K562 (cell line): ENCODE measurements at regions of chr2 and their contacts with region 1.

Region 1: DNA sequence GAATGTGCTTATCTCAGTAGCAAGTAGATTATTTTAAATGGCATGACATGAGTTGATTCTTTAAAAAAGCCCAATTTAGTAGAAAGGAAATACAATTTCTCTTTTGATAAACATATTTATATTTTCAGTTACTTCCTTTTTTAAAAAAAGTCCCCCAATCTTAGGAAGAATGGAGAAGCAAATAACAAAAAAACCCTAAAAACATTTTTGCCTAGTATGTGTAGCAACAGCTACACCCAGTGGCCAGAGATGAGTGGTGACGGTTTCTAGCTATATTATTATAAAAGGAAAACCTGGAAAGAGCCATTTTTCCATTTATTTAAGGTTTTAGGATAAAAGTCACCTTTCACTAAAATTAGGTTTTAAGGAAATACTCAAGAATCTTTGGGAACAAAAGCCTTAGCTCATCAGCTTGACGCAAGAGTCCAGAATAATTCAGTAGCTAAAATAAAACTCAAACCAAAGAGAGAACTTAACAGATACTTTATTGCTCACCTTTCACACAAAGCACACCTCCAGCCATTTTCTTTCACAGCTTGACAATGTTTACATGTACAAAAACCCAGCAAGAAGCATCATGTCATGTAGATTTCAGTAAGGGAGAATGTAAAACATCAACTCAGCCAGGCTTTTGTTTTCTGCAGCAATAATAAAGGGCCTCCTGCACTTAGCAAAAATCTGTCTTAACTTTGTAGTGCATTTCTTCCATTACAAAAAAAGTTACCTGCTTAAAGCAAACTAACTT is 15.7 kb downstream of the FAM98A start:
- DNase-seq: peak; percentile 23 to 50 (median 34)
- ATAC-seq: peak; percentile 75
- H3K4me3 ChIP-seq: no peak overlapping the region
- H3K27ac ChIP-seq: no peak overlapping the region
- H3K4me1 ChIP-seq: no peaks in the 10 kb centered on the region
- H3K27me3 ChIP-seq: no peaks in the 10 kb centered on the region
- CTCF ChIP-seq: peak; percentile 59 to 83 (median 64); a peak in 5 of 6 replicates
- EP300 ChIP-seq: no peak
- POLR2A ChIP-seq: no peak
- RAD21 ChIP-seq: peak; percentile 92 to 96

Region 2: GRCh38 chr2:33412920-33413319 is 170.4 kb before region 1 on chr2:
- CTCF ChIA-PET with region 1: interaction called, 11 read pairs
- POLR2A ChIA-PET with region 1: no interaction called
- in situ Hi-C with region 1: loop called (anchors 25 kb)
- intact Hi-C with region 1: loop called (anchors 1 kb)
- DNase-seq: peak in 3 of 4 experiments; percentile 27 to 56 (median 45)
- ATAC-seq: peak; percentile 83
- H3K4me3 ChIP-seq: no peak overlapping the region
- H3K27ac ChIP-seq: no peak overlapping the region
- H3K4me1 ChIP-seq: no peaks in the 10 kb centered on the region
- H3K27me3 ChIP-seq: peaks cover 4 to 10% of the 10 kb centered on the region in 2 experiments; a peak in 3 of 5 replicates
- CTCF ChIP-seq: peak in 2 of 3 experiments; percentile 57 to 65; a peak in 5 of 6 replicates
- EP300 ChIP-seq: no peak
- POLR2A ChIP-seq: no peak
- RAD21 ChIP-seq: peak; percentile 69 to 91

Region 3: GRCh38 chr2:33441235-33441810 is 142.0 kb before region 1 on chr2:
- CTCF ChIA-PET with region 1: interaction called, 3 read pairs
- POLR2A ChIA-PET with region 1: no interaction called
- in situ Hi-C with region 1: no loop called
- intact Hi-C with region 1: loop called (anchors 10 kb)
- DNase-seq: peak; percentile 23 to 64 (median 42)
- ATAC-seq: peak; percentile 92
- H3K4me3 ChIP-seq: no peak overlapping the region
- H3K27ac ChIP-seq: no peak overlapping the region
- H3K4me1 ChIP-seq: peaks cover 0 to 5% of the 10 kb centered on the region in 2 experiments; a peak in 2 of 5 replicates
- H3K27me3 ChIP-seq: no peaks in the 10 kb centered on the region
- CTCF ChIP-seq: peak; percentile 69 to 71 (median 71)
- EP300 ChIP-seq: no peak
- POLR2A ChIP-seq: no peak
- RAD21 ChIP-seq: peak; percentile 68 to 89

Region 4: DNA sequence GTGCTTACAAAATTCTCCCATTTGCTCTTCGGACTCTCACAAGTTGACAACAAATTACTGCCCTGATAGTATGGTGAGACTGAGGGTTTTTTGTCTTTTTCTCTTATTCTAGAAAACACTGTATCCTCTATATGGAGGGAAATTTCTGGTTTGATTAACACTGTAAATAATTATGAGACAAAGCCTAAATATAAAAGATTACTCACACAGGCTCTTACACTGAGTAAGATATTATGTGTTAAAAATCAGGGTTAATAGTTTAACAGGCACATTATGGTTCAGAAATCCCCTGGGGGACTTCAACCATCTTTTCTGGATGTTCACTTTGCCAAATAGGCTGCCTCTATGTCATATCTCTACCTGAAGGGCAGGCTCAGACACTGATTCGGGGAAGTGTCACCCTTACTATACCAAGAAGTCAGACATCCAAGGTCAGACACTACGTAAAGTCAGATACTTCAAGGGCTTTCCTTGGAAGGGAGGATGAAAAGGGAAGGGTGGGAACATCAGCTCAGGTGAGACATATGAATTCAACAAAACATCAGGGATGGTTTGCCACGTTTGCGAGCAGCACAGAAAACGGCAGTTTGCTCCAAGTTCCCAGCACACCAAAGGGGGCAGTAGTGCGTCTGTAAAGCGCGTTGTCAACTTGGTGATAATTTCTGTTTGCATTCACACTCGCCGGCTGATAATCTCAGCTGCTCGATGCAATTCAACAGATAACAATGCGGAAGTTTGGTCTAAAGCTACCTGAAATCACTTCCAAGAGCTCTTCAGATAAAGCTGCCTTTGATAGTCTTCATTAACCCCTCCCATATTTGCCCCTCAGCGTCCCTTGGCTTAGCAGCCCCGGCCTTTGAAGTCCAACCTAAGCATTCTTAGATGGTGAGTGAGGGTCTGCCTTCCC is 107.9 kb before region 1 on chr2:
- CTCF ChIA-PET with region 1: interaction called, 4 read pairs
- POLR2A ChIA-PET with region 1: no interaction called
- in situ Hi-C with region 1: loop called (anchors 5 kb)
- intact Hi-C with region 1: loop called (anchors 1 kb)
- DNase-seq: peak; percentile 36 to 83 (median 48)
- ATAC-seq: peak; percentile 72
- H3K4me3 ChIP-seq: peak overlapping the region; percentile 40
- H3K27ac ChIP-seq: peak overlapping the region; percentile 38; the same call in 1 of the 3 replicates
- H3K4me1 ChIP-seq: peaks cover 10 to 41% of the 10 kb centered on the region in 2 experiments
- H3K27me3 ChIP-seq: peaks cover 6 to 17% of the 10 kb centered on the region in 2 experiments
- CTCF ChIP-seq: peak; percentile 69 to 88 (median 72)
- EP300 ChIP-seq: 0 out of 2 replicates have a peak, but pooled peaks have one; percentile 36
- POLR2A ChIP-seq: no peak
- RAD21 ChIP-seq: peak; percentile 53 to 73

Region 5: DNA sequence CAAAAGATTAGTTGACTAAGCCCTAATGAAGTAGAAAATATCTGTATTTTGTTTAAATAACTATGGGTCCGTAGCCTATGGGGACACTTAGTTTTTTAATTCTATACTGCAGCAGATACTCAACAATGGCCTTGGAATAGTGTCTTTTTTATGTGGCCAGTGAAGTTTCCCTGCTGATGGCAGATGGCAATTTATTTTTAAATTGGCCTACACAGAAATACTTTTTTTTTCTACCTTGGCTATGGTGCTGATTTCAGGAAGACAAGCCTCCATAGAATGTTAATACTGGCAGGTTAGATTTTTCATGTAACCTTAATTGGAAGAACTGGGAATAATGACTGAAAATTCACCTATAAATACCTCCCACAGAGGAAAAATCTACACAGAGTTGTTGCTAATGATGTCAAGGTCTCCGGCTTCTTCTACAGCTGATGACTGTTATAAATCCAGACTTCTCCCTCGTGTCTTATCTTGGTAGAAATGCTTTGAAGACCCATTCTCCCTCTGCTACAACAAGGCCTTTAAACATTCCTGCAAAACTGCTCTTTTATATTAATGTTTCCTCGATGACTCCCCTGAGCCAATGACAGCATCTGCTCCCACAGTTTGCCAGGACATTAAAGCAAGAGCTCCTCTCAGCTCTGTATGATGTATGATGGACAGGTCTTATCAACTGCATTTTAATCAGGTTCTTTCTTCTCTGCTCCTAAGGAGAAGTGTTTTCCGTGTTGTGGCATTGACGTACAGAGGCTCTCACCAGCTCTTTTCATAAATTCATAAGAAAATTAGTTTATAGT is 44.9 kb after region 1 on chr2:
- CTCF ChIA-PET with region 1: no interaction called
- POLR2A ChIA-PET with region 1: no interaction called
- in situ Hi-C with region 1: no loop called
- intact Hi-C with region 1: no loop called
- DNase-seq: no peak
- ATAC-seq: no peak
- H3K4me3 ChIP-seq: no peak overlapping the region
- H3K27ac ChIP-seq: no peak overlapping the region
- H3K4me1 ChIP-seq: no peaks in the 10 kb centered on the region
- H3K27me3 ChIP-seq: no peaks in the 10 kb centered on the region
- CTCF ChIP-seq: no peak
- EP300 ChIP-seq: no peak
- POLR2A ChIP-seq: no peak
- RAD21 ChIP-seq: no peak